Calu3 (cell line): ENCODE measurements at regions of chr13 and their contacts with region 1.

Region 1: GRCh38 chr13:106548064-106548696 is 12.7 kb upstream of the EFNB2 start:
- DNase-seq: no peak
- H3K4me3 Mint-ChIP-seq: no peak overlapping the region
- H3K27ac Mint-ChIP-seq: no peak overlapping the region
- H3K4me1 Mint-ChIP-seq: no peaks in the 10 kb centered on the region
- H3K27me3 Mint-ChIP-seq: no peaks in the 10 kb centered on the region
- CTCF ChIP-seq: no peak

Region 2: DNA sequence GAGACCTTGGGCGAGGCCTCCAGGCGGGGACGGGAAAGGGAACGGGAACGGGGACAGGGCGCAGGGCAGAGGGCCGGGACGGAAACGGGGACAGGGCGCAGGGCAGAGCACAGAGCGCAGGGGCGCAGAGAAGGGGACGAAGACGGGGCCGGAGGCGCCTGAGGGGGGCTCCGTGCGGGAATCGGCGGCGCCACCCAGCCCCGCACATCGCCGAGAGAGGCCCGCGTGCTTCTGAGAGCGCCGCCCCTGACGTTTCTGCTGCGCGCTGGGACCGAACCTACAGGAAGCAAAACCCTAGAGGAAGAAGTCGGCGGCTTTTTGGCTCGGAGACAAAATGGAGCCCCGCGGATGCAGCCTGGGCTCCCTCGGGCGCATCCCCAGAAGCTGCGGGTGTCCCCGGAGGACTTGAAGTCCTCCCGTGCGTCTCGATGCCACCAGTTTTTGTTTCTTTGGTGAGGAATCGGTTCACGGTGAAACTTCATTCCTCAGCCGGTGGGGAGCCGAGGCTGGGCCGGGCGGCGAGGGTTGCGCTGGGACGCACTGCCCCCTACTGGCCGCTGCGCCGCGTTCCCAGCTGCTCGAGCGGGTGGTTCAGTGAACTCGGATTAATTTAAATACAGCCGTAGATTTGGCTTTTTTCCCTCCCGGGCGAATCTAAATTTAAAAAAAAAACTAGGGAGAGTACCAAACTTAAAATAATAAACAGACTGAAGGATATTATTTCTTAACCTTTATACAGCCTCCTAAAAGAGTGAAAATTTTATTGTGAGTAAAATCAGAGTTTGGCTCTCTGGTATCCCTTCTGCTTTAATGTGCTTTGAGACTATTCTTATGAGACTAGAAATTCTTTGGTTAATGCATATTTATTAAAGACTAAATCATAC is 369.7 kb after region 1 on chr13:
- CTCF ChIA-PET with region 1: no interaction called
- intact Hi-C with region 1: loop called (anchors 10 kb)
- DNase-seq: peak; percentile 69
- H3K4me3 Mint-ChIP-seq: peak overlapping the region; percentile 53
- H3K27ac Mint-ChIP-seq: no peak overlapping the region
- H3K4me1 Mint-ChIP-seq: no peaks in the 10 kb centered on the region
- H3K27me3 Mint-ChIP-seq: no peaks in the 10 kb centered on the region
- CTCF ChIP-seq: peak; percentile 43